ENCODE measurements at regions of chr11 and their contacts with region 1.

Region 1: DNA sequence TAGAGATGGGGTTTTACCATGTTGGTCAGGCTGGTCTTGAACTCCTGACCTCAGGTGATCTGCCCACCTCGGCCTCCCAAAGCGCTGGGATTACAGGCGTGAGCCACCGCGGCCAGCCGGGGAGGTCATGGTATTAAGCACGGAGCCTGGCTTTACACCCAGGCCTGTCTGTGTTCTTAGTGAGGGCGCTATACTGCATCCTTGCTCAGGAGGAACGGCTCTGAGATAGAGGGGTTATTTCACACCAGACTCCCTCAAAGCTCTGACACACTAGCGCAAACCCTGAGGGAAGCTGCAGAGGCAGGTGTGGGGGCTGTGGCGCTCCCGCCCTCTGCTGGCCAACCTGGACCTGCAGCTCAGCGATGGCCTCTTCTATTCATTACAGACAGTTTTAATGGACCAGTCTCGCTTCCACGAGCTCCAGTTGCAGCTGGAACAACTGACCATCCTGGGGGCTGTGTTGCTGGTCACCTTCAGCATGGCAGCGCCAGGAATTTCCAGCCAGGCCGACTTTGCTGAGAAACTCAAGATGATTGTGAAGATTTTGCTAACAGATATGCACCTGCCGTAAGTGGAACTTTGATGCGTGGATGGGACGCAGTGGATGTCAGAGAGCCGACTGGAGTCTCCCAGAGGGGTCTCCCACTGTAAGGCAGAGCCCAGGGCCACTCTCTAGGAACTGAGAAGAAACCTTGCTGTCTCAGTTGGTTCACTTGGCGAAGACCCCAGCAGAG is 26.2 kb downstream of the TCP11L1 start:
- DNase-seq: peak; percentile 55 to 63
- H3K4me3 ChIP-seq: no peak overlapping the region
- H3K27ac ChIP-seq: no peak overlapping the region
- H3K4me1 ChIP-seq: peaks cover 0 to 3% of the 10 kb centered on the region in 2 donors
- H3K27me3 ChIP-seq: no peaks in the 10 kb centered on the region
- CTCF ChIP-seq: peak; percentile 67 to 86 (median 76)
- POLR2A ChIP-seq: no peak

Region 2: GRCh38 chr11:32809313-32809712 is 256.3 kb before region 1 on chr11:
- intact Hi-C with region 1: loop called (anchors 10 kb)
- DNase-seq: peak; percentile 37 to 44
- H3K4me3 ChIP-seq: no peak overlapping the region
- H3K27ac ChIP-seq: no peak overlapping the region
- H3K4me1 ChIP-seq: no peaks in the 10 kb centered on the region
- H3K27me3 ChIP-seq: no peaks in the 10 kb centered on the region
- CTCF ChIP-seq: peak; percentile 12 to 53 (median 49)
- POLR2A ChIP-seq: no peak

Region 3: GRCh38 chr11:32960553-32961164 is 105.0 kb before region 1 on chr11:
- intact Hi-C with region 1: loop called (anchors 10 kb)
- DNase-seq: no peak
- H3K4me3 ChIP-seq: no peak overlapping the region
- H3K27ac ChIP-seq: no peak overlapping the region
- H3K4me1 ChIP-seq: no peaks in the 10 kb centered on the region
- H3K27me3 ChIP-seq: no peaks in the 10 kb centered on the region
- CTCF ChIP-seq: peak; percentile 50 to 69 (median 54)
- POLR2A ChIP-seq: no peak

Region 4: GRCh38 chr11:33324302-33324985 is 258.8 kb after region 1 on chr11:
- intact Hi-C with region 1: no loop called
- DNase-seq: no peak
- H3K4me3 ChIP-seq: no peak overlapping the region
- H3K27ac ChIP-seq: no peak overlapping the region
- H3K4me1 ChIP-seq: peaks cover 0 to 6% of the 10 kb centered on the region in 2 donors
- H3K27me3 ChIP-seq: no peaks in the 10 kb centered on the region
- CTCF ChIP-seq: no peak
- POLR2A ChIP-seq: no peak